Mammary epithelial cell (primary cell): ENCODE measurements at regions of chr3 and their contacts with region 1.

Region 1: GRCh38 chr3:147267434-147267833 is 138.9 kb downstream of the ZIC4 start:
- DNase-seq: no peak
- H3K4me3 ChIP-seq: no peak overlapping the region
- H3K27ac ChIP-seq: no peak overlapping the region
- H3K4me1 ChIP-seq: no peaks in the 10 kb centered on the region
- H3K27me3 ChIP-seq: no peaks in the 10 kb centered on the region
- CTCF ChIP-seq: no peak

Region 2: GRCh38 chr3:147218965-147219364 is 48.5 kb before region 1 on chr3:
- CTCF ChIA-PET with region 1: no interaction called
- dilution Hi-C with region 1: no loop called
- in situ Hi-C with region 1: no loop called
- intact Hi-C with region 1: no loop called
- DNase-seq: no peak
- H3K4me3 ChIP-seq: no peak overlapping the region
- H3K27ac ChIP-seq: no peak overlapping the region
- H3K4me1 ChIP-seq: no peaks in the 10 kb centered on the region
- H3K27me3 ChIP-seq: peaks cover 2% of the 10 kb centered on the region
- CTCF ChIP-seq: no peak

Region 3: DNA sequence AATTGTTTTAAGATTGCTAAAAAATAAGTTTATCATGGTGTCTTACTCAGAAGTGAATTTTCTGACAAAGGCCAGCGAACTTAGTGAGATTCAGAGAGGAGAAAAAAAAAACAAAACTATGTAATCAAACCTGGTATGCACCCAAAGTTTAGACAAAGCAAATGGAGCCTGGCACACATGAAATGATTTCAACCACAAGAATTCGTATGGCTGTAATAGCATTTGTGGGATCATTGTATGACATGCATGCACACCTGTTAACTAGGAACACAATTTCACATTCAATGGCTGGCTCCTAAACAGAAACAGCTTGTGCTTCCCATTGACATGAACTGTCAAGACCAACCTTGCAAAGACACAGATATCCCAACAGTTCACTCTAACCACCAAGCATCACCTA is 44.3 kb after region 1 on chr3:
- CTCF ChIA-PET with region 1: interaction called, 3 read pairs
- dilution Hi-C with region 1: loop called (anchors 5 kb)
- in situ Hi-C with region 1: no loop called
- intact Hi-C with region 1: no loop called
- DNase-seq: no peak
- H3K4me3 ChIP-seq: no peak overlapping the region
- H3K27ac ChIP-seq: no peak overlapping the region
- H3K4me1 ChIP-seq: no peaks in the 10 kb centered on the region
- H3K27me3 ChIP-seq: no peaks in the 10 kb centered on the region
- CTCF ChIP-seq: no peak

Region 4: GRCh38 chr3:147688868-147689267 is 421.4 kb after region 1 on chr3:
- CTCF ChIA-PET with region 1: no interaction called
- dilution Hi-C with region 1: no loop called
- in situ Hi-C with region 1: no loop called
- intact Hi-C with region 1: no loop called
- DNase-seq: no peak
- H3K4me3 ChIP-seq: no peak overlapping the region
- H3K27ac ChIP-seq: no peak overlapping the region
- H3K4me1 ChIP-seq: no peaks in the 10 kb centered on the region
- H3K27me3 ChIP-seq: peaks cover 4% of the 10 kb centered on the region
- CTCF ChIP-seq: no peak